ENCODE measurements at regions of chr19 and their contacts with region 1.

Region 1: DNA sequence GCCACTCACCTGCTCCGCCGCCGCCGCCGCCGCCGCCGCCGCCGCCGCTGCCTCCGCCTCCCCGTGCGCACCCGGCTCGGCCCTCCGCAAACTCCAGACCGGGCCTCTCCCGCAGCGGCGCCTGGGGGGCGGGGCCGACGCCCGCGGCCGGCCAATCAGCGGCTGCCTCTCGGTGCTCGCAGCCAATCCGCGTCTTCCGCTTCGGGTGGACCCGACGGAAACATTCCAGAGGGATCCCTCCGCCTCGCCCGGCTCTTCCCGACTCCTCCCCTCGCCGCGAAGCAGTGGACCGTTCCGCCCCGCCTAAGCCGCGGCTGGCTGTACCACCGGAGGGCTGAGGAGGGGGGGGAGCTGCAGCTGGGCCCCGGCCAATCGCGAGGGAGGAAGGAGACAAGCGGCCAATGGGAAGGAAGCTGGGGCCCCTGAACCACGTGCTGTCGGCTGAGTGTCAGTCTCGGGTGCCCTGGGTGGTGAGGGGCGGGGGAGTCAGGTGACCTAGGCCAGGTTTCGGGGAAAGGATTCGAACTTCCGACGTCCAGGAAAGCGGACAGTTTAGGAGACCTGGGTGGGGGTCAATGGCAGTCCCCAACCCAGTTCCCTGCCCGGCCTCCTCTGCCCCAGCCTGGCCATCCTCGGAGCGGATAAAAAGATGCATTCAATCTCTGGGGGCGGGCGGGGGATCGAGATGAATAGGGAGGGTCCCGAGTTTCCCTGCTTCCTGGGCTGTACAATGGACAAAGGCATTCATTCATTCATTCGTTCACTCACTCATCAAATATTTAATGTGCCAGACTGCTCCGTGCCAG is at the start of gene GIPC1:
- DNase-seq: peak; percentile 99
- H3K4me3 Mint-ChIP-seq: peak within 1 kb of the TSS; percentile 76
- H3K27ac Mint-ChIP-seq: peak within 1 kb of the TSS; percentile 83
- H3K4me1 Mint-ChIP-seq: peaks cover 38% of the 10 kb centered on the region
- H3K27me3 Mint-ChIP-seq: no peaks in the 10 kb centered on the region
- CTCF ChIP-seq: no peak
- total RNA-seq, gene GIPC1: 107 and 108 TPM in 2 replicates

Region 2: GRCh38 chr19:14419106-14419813 is 77.0 kb before region 1 on chr19 and contains the start of gene DDX39A:
- CTCF ChIA-PET with region 1: interaction called, 3 read pairs
- POLR2A ChIA-PET with region 1: interaction called, 11 read pairs
- intact Hi-C with region 1: no loop called
- DNase-seq: peak; percentile 100
- H3K4me3 Mint-ChIP-seq: peak within 1 kb of the TSS; percentile 79
- H3K27ac Mint-ChIP-seq: peak within 1 kb of the TSS; percentile 88
- H3K4me1 Mint-ChIP-seq: peaks cover 23% of the 10 kb centered on the region
- H3K27me3 Mint-ChIP-seq: no peaks in the 10 kb centered on the region
- CTCF ChIP-seq: no peak
- total RNA-seq, gene DDX39A: 62.1 and 65.4 TPM in 2 replicates

Region 3: DNA sequence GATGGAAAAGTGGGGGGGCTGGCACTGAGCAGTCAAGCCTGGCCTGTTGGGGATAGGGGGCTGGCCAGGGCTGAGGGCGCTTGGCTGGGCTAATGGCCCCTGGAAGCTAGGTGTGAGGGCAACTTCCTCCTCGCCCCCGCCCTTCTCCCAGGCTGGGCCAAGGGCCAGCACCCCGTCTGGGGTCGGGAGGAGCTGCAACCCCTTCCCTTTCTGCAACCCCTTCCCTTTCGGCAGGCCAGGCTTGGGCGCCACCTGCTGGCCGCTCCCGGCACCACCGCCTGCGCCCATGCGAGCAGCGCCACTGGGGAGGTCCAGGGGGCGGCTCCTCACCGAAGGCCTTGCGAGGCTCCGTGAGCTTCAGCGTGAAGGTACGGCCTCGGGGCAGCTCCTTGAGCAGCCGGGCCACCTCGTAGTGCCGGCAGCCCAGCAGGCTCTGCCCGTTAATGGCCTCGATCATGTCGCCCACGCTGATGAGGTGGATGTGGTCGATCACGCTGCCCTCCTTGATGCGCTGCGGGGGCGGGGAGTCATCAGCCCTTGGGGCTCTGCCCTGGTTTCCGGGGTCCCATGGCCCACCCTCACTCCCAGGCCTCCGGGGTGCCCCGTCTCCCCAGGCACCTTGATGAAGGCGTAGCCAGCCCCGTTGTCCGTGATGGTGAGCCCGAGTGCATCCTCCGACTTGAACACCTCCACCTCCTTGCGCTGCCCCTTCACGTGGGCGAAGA is 16.1 kb before region 1 on chr19:
- CTCF ChIA-PET with region 1: interaction called, 50 read pairs
- POLR2A ChIA-PET with region 1: interaction called, 3 read pairs
- intact Hi-C with region 1: no loop called
- DNase-seq: no peak
- H3K4me3 Mint-ChIP-seq: no peak overlapping the region
- H3K27ac Mint-ChIP-seq: no peak overlapping the region
- H3K4me1 Mint-ChIP-seq: peaks cover 14% of the 10 kb centered on the region
- H3K27me3 Mint-ChIP-seq: no peaks in the 10 kb centered on the region
- CTCF ChIP-seq: peak; percentile 78

Measured in MCF 10A (cell line).